ENCODE measurements at regions of chr12 and their contacts with region 1.

Region 1: GRCh38 chr12:22443379-22444316 is 100.7 kb downstream of the C2CD5 start:
- DNase-seq: peak; percentile 54
- H3K4me3 ChIP-seq: no peak overlapping the region
- H3K27ac ChIP-seq: no peak overlapping the region
- H3K4me1 ChIP-seq: no peaks in the 10 kb centered on the region
- H3K27me3 ChIP-seq: no peaks in the 10 kb centered on the region
- CTCF ChIP-seq: peak; percentile 66 to 79 (median 73)
- EP300 ChIP-seq: no peak
- POLR2A ChIP-seq: no peak

Region 2: DNA sequence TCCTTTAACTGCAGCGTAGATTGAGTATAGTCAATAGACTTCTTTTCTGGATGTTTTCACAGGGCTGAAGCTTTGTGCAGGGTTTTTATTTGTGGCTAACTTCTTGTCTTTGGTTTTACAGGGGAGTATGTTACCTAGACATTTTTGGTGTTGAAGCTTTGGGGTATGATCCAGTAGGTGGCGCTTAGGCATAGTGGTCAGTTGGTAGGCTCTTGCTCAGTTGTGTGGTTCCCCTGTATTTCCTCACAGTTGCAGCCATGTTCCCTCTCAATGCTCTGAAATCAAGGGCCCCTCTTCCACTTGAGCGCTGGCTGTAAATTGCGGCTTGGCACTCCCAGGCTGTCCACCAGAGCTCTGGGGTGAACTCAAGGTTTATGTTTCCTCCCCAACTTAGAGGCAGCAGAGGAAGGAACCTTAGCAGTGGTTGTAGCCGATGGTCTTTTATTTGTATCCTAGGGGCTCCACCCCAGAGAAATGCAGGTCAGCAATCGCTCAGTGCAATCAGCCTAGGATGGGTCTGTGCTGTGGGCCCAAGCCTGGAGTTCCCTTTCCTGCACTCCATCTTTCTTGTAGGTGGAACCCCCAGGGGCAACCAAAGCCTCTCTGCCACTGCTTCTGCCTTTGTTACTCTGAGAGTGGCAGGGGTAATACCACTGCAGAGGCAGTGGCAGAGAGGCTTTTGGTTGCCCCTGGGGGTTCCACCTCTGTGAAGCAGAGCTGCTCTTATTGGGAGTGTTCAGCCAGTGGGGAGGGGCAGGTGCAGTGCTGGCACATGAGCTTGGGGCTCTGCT is 342.5 kb before region 1 on chr12:
- in situ Hi-C with region 1: loop called in 1 of 4 experiments (anchors 10 kb)
- intact Hi-C with region 1: no loop called
- DNase-seq: peak; percentile 31
- H3K4me3 ChIP-seq: no peak overlapping the region
- H3K27ac ChIP-seq: no peak overlapping the region
- H3K4me1 ChIP-seq: no peaks in the 10 kb centered on the region
- H3K27me3 ChIP-seq: no peaks in the 10 kb centered on the region
- CTCF ChIP-seq: peak; percentile 42 to 53 (median 51)
- EP300 ChIP-seq: no peak
- POLR2A ChIP-seq: no peak

Region 3: DNA sequence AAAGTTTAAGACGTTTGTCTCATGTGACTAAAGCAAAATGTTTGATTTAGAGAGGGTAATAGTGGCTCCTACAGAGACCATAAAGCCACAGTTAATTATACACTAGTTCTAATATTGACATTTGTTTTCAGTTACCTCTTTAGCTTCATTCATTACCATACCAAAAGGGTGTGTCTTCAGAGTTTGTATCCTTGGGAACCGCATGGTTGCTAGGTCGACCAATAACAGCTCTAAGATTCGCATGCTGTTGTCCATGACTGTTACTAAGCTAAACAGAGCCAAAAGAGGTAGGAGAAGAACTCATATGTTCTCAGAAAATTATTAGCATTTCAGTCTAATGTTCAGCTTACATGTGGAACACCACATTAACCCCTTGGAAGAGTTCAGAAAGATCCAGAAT is 145.2 kb after region 1 on chr12:
- in situ Hi-C with region 1: no loop called
- intact Hi-C with region 1: no loop called
- DNase-seq: peak; percentile 19
- H3K4me3 ChIP-seq: no peak overlapping the region
- H3K27ac ChIP-seq: peak overlapping the region in 3 of 4 donors; percentile 26 to 47 (median 41)
- H3K4me1 ChIP-seq: peaks cover 0 to 5% (median 2%) of the 10 kb centered on the region in 4 donors
- H3K27me3 ChIP-seq: no peaks in the 10 kb centered on the region
- CTCF ChIP-seq: no peak
- EP300 ChIP-seq: no peak
- POLR2A ChIP-seq: no peak

Measured in transverse colon (tissue), 4 donors.